ENCODE measurements at regions of chr5 and their contacts with region 1.

Region 1: DNA sequence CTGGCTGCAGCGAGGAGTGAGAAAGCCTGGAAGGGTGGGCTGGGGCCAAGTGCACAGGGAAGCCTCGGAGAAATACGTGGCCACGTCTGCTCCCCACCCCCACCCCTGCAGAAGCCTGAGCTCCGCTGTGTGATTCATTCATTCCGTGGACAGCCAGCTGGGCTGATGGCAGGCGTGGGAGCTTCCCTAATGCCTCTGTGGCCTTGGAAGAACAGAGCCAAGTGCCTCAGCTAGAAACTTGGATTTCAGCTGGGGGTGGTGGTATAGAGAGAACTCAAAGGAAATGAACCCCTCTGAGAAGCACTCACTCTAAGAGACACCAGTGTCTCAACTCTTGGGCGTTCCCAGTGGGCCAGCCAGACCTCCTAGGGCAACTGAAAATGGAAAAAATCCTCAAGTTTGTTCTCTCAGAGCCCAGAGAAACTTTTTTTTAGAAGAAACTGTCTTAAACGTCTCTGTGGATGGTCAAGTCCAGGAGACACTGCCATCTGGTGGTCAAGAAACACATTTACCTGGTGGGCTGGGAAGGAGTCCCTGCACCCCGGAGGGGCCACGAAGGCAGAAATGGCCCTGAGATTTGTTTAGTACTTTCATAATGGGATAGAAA is 18.0 kb downstream of the ATOX1 start:
- DNase-seq: peak; percentile 60
- H3K4me3 ChIP-seq: no peak overlapping the region
- H3K27ac ChIP-seq: peak overlapping the region; percentile 81
- H3K4me1 ChIP-seq: peaks cover 58% of the 10 kb centered on the region
- H3K27me3 ChIP-seq: no peaks in the 10 kb centered on the region
- CTCF ChIP-seq: peak; percentile 81

Region 2: GRCh38 chr5:151447174-151448037 is 293.0 kb before region 1 on chr5 and contains the start of gene SLC36A1:
- CTCF ChIA-PET with region 1: no interaction called
- dilution Hi-C with region 1: no loop called
- in situ Hi-C with region 1: loop called in 1 of 2 experiments (anchors 10 kb)
- intact Hi-C with region 1: loop called (anchors 1 kb)
- DNase-seq: peak; percentile 83
- H3K4me3 ChIP-seq: peak within 1 kb of the TSS; percentile 56 to 77 (median 77)
- H3K27ac ChIP-seq: peak within 1 kb of the TSS; percentile 20
- H3K4me1 ChIP-seq: peaks cover 13% of the 10 kb centered on the region
- H3K27me3 ChIP-seq: peaks cover 2% of the 10 kb centered on the region
- CTCF ChIP-seq: peak; percentile 93 to 94
- total RNA-seq, gene SLC36A1: 9.7 to 11.0 TPM

Region 3: GRCh38 chr5:151569132-151570046 is 171.1 kb before region 1 on chr5:
- CTCF ChIA-PET with region 1: no interaction called
- dilution Hi-C with region 1: loop called (anchors 25 kb)
- in situ Hi-C with region 1: loop called in 1 of 2 experiments (anchors 10 kb)
- intact Hi-C with region 1: loop called (anchors 2 kb)
- DNase-seq: peak; percentile 83
- H3K4me3 ChIP-seq: no peak overlapping the region
- H3K27ac ChIP-seq: peak overlapping the region; percentile 83
- H3K4me1 ChIP-seq: peaks cover 55% of the 10 kb centered on the region
- H3K27me3 ChIP-seq: no peaks in the 10 kb centered on the region
- CTCF ChIP-seq: no peak

Region 4: GRCh38 chr5:151664694-151665585 is 75.5 kb before region 1 on chr5:
- CTCF ChIA-PET with region 1: interaction called, 5 read pairs
- dilution Hi-C with region 1: loop called (anchors 5 kb)
- in situ Hi-C with region 1: loop called (anchors 5 kb)
- intact Hi-C with region 1: no loop called
- DNase-seq: no peak
- H3K4me3 ChIP-seq: no peak overlapping the region
- H3K27ac ChIP-seq: no peak overlapping the region
- H3K4me1 ChIP-seq: peaks cover 7% of the 10 kb centered on the region
- H3K27me3 ChIP-seq: no peaks in the 10 kb centered on the region
- CTCF ChIP-seq: no peak

Region 5: DNA sequence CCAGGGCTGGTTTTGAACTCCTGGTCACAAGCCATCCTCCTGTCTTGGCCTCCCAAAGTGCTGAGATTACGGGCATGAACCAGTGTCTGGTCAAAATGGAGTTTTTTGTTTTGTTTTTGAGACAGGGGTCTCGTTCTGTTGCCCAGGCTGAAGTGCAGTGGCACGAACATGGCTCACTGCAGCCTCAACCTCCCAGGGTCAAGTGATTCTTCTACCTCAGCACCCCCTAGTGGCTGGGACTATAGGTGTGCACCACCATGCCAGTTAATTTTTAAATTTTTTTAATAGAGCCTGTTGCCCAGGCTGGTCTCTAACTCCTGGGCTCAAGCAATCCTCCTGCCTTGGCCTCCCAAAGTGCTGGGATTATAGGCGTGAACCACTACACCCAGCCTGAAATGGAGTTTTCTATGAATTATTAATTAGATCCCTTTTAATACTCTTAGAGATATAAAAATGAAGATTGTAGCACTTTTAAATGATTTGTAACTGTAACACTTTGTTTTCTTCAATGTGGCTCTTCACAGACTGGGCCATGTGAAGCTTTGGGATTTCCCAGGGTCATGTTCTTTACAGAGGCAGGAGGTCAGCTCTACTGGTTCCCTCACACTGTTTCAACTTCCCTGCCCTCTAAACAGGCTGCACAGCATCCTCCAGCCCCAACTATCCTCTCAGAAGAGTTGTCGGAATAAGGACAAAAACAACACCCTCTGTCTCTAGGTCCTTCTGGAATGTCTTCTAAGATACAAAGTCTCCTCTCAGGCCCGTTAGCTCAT is 21.0 kb before region 1 on chr5:
- CTCF ChIA-PET with region 1: interaction called, 4 read pairs
- dilution Hi-C with region 1: no loop called
- in situ Hi-C with region 1: no loop called
- intact Hi-C with region 1: loop called (anchors 1 kb)
- DNase-seq: no peak
- H3K4me3 ChIP-seq: no peak overlapping the region
- H3K27ac ChIP-seq: no peak overlapping the region
- H3K4me1 ChIP-seq: peaks cover 12% of the 10 kb centered on the region
- H3K27me3 ChIP-seq: no peaks in the 10 kb centered on the region
- CTCF ChIP-seq: peak; percentile 51 to 70

Region 6: GRCh38 chr5:151771259-151772028 is 31.0 kb after region 1 on chr5 and contains the start of gene G3BP1:
- CTCF ChIA-PET with region 1: interaction called, 6 read pairs
- dilution Hi-C with region 1: no loop called
- in situ Hi-C with region 1: no loop called
- intact Hi-C with region 1: loop called (anchors 1 kb)
- DNase-seq: peak; percentile 100
- H3K4me3 ChIP-seq: peak within 1 kb of the TSS; percentile 63 to 93 (median 80)
- H3K27ac ChIP-seq: peak within 1 kb of the TSS; percentile 84
- H3K4me1 ChIP-seq: peaks cover 26% of the 10 kb centered on the region
- H3K27me3 ChIP-seq: no peaks in the 10 kb centered on the region
- CTCF ChIP-seq: peak; percentile 36 to 77
- total RNA-seq, gene G3BP1: 193 to 252 TPM

Measured in mammary epithelial cell (primary cell).